Activated T-helper 2 cell treated with anti-CD3 and anti-CD28 coated beads, Interferon-gamma antibody, Interleukin-2, Interleukin-4, amounts not matched to agents 10 μg/mL and 5 μg/mL and 100 μg/mL, durations not matched to agents 14 hours and 24 hours and 36 hours (primary cell): ENCODE measurements at regions of chr9 and their contacts with region 1.

Region 1: GRCh38 chr9:83937911-83938323 is 16.7 kb upstream of the KIF27 start:
- DNase-seq: peak; percentile 23
- H3K4me3 Mint-ChIP-seq: no peak overlapping the region
- H3K27ac Mint-ChIP-seq: no peak overlapping the region
- H3K4me1 Mint-ChIP-seq: peaks cover 13% of the 10 kb centered on the region
- H3K27me3 Mint-ChIP-seq: no peaks in the 10 kb centered on the region

Region 2: DNA sequence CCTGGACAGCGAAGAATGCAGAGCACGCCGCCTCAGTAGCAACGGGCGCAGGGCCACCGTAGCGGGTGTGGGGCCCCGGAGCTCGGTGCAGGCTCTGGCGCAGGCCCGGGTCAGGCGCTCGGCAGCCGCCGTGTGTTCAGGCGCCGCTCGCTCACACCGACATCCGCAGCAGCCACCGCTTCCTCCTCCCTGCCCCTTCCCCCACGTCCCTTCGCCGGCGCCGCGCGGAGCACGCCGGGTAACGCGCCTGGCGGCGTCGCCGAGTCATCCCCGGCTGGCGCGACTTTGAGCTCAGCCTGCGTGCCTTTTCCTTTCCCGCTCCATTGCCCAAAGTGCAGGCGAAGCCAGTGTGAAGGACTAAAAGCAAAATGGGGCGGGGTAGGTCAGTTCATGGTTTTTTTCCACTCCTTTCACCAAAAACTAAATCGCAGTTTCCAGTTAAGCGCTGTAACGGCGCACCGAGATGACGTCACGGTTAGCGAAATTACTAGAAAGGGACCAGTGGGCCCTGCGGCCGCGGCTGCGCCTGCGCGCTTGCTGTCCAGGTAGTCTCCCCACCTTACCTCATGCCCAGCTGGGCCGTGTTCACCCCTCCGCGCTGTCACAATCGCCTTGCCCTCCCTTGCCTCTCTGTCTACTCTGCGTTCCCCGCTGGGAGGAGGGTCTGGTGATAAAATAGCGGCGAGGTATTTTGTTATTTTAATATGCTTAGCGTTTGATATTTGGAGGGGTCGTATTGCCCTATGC is 230.0 kb before region 1 on chr9 and contains the start of gene UBQLN1:
- intact Hi-C with region 1: no loop called
- DNase-seq: peak; percentile 90
- H3K4me3 Mint-ChIP-seq: peak within 1 kb of the TSS; percentile 88
- H3K27ac Mint-ChIP-seq: peak within 1 kb of the TSS; percentile 96
- H3K4me1 Mint-ChIP-seq: peaks cover 27% of the 10 kb centered on the region
- H3K27me3 Mint-ChIP-seq: no peaks in the 10 kb centered on the region
- total RNA-seq, gene UBQLN1: 138 and 140 TPM in 2 replicates

Region 3: GRCh38 chr9:84170521-84171141 is 232.7 kb after region 1 on chr9:
- intact Hi-C with region 1: loop called (anchors 1 kb)
- DNase-seq: no peak
- H3K4me3 Mint-ChIP-seq: no peak overlapping the region
- H3K27ac Mint-ChIP-seq: no peak overlapping the region
- H3K4me1 Mint-ChIP-seq: peaks cover 2% of the 10 kb centered on the region
- H3K27me3 Mint-ChIP-seq: peaks cover 8% of the 10 kb centered on the region

Region 4: GRCh38 chr9:84187090-84187489 is 249.2 kb after region 1 on chr9:
- intact Hi-C with region 1: no loop called
- DNase-seq: no peak
- H3K4me3 Mint-ChIP-seq: no peak overlapping the region
- H3K27ac Mint-ChIP-seq: no peak overlapping the region
- H3K4me1 Mint-ChIP-seq: no peaks in the 10 kb centered on the region
- H3K27me3 Mint-ChIP-seq: peaks cover 6% of the 10 kb centered on the region

Region 5: GRCh38 chr9:84261082-84261746 is 323.3 kb after region 1 on chr9:
- intact Hi-C with region 1: loop called (anchors 1 kb)
- DNase-seq: peak; percentile 25
- H3K4me3 Mint-ChIP-seq: no peak overlapping the region
- H3K27ac Mint-ChIP-seq: no peak overlapping the region
- H3K4me1 Mint-ChIP-seq: peaks cover 7% of the 10 kb centered on the region
- H3K27me3 Mint-ChIP-seq: peaks cover 9% of the 10 kb centered on the region